ENCODE measurements at regions of chr18 and their contacts with region 1.

Region 1: GRCh38 chr18:63979409-63979920 is 9.6 kb downstream of the SERPINB8 start:
- DNase-seq: peak; percentile 66
- ATAC-seq: peak; percentile 94
- H3K4me3 ChIP-seq: no peak overlapping the region
- H3K27ac ChIP-seq: no peak overlapping the region
- H3K4me1 ChIP-seq: no peaks in the 10 kb centered on the region
- H3K27me3 ChIP-seq: no peaks in the 10 kb centered on the region
- CTCF ChIP-seq: peak; percentile 83
- EP300 ChIP-seq: no peak
- POLR2A ChIP-seq: no peak
- RAD21 ChIP-seq: no peak

Region 2: GRCh38 chr18:63949068-63949737 is 30.3 kb before region 1 on chr18 and contains the start of gene HMSD:
- CTCF ChIA-PET with region 1: no interaction called
- POLR2A ChIA-PET with region 1: no interaction called
- in situ Hi-C with region 1: no loop called
- intact Hi-C with region 1: loop called (anchors 1 kb)
- DNase-seq: no peak
- ATAC-seq: peak; percentile 100
- H3K4me3 ChIP-seq: peak within 1 kb of the TSS in 1 of 3 experiments; percentile 48; a peak in 2 of 6 replicates
- H3K27ac ChIP-seq: no peak within 1 kb of the TSS
- H3K4me1 ChIP-seq: no peaks in the 10 kb centered on the region
- H3K27me3 ChIP-seq: no peaks in the 10 kb centered on the region
- CTCF ChIP-seq: peak; percentile 61
- EP300 ChIP-seq: no peak
- POLR2A ChIP-seq: no peak
- RAD21 ChIP-seq: no peak
- total RNA-seq, gene HMSD: not detected in 2 replicates

Region 3: GRCh38 chr18:64027931-64028695 is 48.6 kb after region 1 on chr18:
- CTCF ChIA-PET with region 1: no interaction called
- POLR2A ChIA-PET with region 1: no interaction called
- in situ Hi-C with region 1: no loop called
- intact Hi-C with region 1: no loop called
- DNase-seq: no peak
- ATAC-seq: no peak
- H3K4me3 ChIP-seq: no peak overlapping the region
- H3K27ac ChIP-seq: no peak overlapping the region
- H3K4me1 ChIP-seq: no peaks in the 10 kb centered on the region
- H3K27me3 ChIP-seq: peaks cover 0 to 1% of the 10 kb centered on the region in 2 experiments; a peak in 1 of 5 replicates
- CTCF ChIP-seq: no peak
- EP300 ChIP-seq: no peak
- POLR2A ChIP-seq: no peak
- RAD21 ChIP-seq: no peak

Measured in HepG2 (cell line).